Dendritic cell treated with granulocyte-macrophage colony-stimulating factor and Interleukin-4, amounts not matched to agents 40 ng/mL and 50 ng/mL, for 4 days (primary cell): ENCODE measurements at regions of chr16 and their contacts with region 1.

Region 1: DNA sequence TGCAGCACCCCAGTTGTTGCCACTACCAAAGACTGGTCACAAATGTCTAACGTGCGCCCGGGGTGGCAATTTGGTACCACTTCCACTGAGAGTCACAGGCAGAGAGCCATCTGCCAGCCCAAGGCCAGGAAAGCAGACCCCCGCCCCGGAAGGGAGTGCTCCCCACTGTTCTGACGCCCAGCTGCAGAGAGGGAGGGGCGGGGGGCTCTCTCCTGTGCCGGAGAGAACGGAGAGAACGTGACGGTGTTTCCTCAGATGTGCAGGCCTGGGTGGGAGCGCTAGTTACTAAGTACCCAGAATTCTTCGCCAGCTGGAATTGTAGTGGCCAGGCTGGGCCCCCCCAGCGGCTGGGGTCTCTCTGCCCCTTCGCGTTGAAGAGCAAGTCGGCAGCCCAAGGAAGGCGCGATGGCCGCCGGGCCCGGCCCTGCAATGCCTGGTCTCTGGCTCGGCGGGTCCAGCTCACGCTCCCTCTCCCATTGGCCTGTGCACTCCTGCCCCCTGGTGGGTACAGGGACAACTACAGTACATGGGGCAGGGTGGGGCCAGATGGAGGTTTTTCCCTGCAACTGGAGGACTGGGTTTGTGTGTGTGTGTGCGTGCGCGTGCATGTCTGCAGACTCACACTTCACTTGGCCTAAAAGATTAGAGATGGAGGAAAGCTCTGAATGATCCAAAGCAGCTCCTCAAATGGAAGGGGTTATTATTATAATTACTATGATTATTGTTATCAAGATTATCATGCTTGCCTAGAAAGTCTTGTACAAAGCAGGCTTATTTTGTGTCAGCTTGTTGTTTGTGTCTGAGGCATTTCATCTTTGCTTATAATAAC is 107.1 kb downstream of the AMFR start:
- H3K4me3 Mint-ChIP-seq: peak overlapping the region; percentile 30
- H3K27ac Mint-ChIP-seq: no peak overlapping the region
- H3K4me1 Mint-ChIP-seq: peaks cover 7% of the 10 kb centered on the region
- H3K27me3 Mint-ChIP-seq: peaks cover 13% of the 10 kb centered on the region

Region 2: GRCh38 chr16:55453909-55454308 is 864.3 kb before region 1 on chr16:
- intact Hi-C with region 1: loop called (anchors 10 kb)
- H3K4me3 Mint-ChIP-seq: no peak overlapping the region
- H3K27ac Mint-ChIP-seq: no peak overlapping the region
- H3K4me1 Mint-ChIP-seq: peaks cover 2% of the 10 kb centered on the region
- H3K27me3 Mint-ChIP-seq: no peaks in the 10 kb centered on the region

Region 3: DNA sequence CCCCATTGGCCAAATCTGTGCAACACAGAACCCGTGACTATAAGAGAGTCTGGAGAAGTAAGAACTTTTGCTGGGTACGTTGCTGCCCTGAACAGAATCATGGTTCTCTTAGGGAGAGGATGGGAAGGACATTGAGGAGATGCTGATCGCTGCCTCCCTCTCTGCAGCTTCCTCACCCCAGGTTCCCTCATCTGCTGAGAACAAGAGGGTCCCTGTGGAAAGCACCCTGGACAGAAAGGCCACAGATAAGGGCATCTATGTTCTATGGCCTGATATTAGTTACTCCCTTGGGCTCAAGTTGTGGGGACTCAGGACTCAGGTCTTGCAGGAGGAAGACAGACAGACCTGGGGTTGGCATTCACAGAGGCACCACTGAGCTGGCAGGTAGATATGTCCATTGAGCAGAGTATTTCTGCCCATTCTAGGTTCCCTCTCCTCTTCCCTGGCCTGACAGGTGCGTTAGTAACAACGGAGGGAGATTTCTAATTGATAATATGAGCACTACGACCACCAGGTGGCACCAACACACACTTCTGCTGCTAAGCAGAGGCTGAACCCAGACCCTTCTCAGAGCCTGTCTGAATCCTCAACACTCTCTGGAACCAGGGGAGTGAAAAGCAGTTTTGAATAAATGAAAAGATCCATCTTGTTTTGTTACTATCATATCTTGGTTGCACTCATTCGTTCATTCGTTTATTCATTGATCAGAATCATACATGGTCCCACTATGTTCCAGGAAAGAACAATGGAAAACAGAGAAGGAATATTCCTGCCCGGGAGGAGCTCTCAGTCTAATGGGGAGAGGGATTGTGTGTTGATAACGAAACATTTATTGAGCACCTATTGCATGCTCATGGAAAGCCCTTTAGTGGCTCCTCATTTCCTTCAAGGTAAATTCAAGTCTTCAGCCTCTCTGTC is 606.0 kb before region 1 on chr16:
- intact Hi-C with region 1: loop called (anchors 5 kb)
- H3K4me3 Mint-ChIP-seq: no peak overlapping the region
- H3K27ac Mint-ChIP-seq: no peak overlapping the region
- H3K4me1 Mint-ChIP-seq: no peaks in the 10 kb centered on the region
- H3K27me3 Mint-ChIP-seq: peaks cover 9% of the 10 kb centered on the region

Region 4: GRCh38 chr16:55944377-55944802 is 373.8 kb before region 1 on chr16:
- intact Hi-C with region 1: loop called (anchors 1 kb)
- H3K4me3 Mint-ChIP-seq: no peak overlapping the region
- H3K27ac Mint-ChIP-seq: no peak overlapping the region
- H3K4me1 Mint-ChIP-seq: no peaks in the 10 kb centered on the region
- H3K27me3 Mint-ChIP-seq: peaks cover 31% of the 10 kb centered on the region

Region 5: GRCh38 chr16:56041686-56042085 is 276.5 kb before region 1 on chr16:
- intact Hi-C with region 1: loop called (anchors 5 kb)
- H3K4me3 Mint-ChIP-seq: no peak overlapping the region
- H3K27ac Mint-ChIP-seq: no peak overlapping the region
- H3K4me1 Mint-ChIP-seq: peaks cover 6% of the 10 kb centered on the region
- H3K27me3 Mint-ChIP-seq: peaks cover 34% of the 10 kb centered on the region

Region 6: DNA sequence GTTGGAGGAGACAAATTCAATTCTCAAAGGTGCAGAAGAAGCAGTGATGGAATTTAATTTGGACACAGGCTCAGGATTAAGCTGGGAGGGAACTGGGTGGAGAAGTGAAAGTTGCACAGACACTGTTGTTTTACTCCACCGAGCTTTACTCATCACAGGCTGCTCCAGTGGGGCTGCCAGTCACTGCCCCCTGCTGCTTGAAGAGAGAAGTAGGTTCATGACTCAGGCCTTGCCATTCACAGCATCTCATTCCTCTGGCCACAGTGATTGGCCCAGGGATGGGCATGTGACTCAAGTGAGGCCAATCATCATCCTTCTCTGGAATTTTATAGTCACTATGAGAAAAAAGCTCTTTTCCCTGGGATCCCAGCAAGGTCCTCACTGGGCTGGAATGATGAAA is 115.2 kb before region 1 on chr16:
- intact Hi-C with region 1: loop called (anchors 10 kb)
- H3K4me3 Mint-ChIP-seq: no peak overlapping the region
- H3K27ac Mint-ChIP-seq: no peak overlapping the region
- H3K4me1 Mint-ChIP-seq: peaks cover 14% of the 10 kb centered on the region
- H3K27me3 Mint-ChIP-seq: peaks cover 16% of the 10 kb centered on the region

Region 7: DNA sequence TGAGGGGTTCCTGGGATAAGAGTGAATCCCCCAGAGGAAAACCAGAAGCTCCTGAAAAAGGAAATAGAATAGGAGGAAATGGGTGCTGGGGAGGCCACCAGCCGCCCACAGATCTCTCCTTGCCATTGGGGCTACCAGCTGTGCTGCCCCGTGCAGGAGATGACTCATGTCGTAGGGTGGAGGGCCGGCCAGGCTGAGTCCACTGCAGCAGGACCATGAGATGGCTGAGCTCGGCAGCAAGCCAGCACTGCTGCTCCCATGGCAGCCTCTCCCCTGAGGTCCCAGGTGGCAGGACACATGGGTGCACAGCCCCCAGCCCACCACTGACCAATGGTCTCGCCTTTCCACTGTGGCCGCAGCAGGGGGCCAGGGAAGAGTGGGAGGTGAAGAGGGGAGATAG is 31.4 kb before region 1 on chr16:
- intact Hi-C with region 1: no loop called
- H3K4me3 Mint-ChIP-seq: no peak overlapping the region
- H3K27ac Mint-ChIP-seq: peak overlapping the region; percentile 6
- H3K4me1 Mint-ChIP-seq: peaks cover 41% of the 10 kb centered on the region
- H3K27me3 Mint-ChIP-seq: no peaks in the 10 kb centered on the region